Caco-2 (cell line): ENCODE measurements at regions of chr7 and their contacts with region 1.

Region 1: GRCh38 chr7:87506246-87507180 is 31.0 kb upstream of the ABCB4 start:
- DNase-seq: no peak
- H3K4me3 ChIP-seq: no peak overlapping the region
- H3K4me3 Mint-ChIP-seq: no peak overlapping the region
- H3K27ac Mint-ChIP-seq: no peak overlapping the region
- H3K4me1 ChIP-seq: no peaks in the 10 kb centered on the region
- H3K4me1 Mint-ChIP-seq: no peaks in the 10 kb centered on the region
- H3K27me3 ChIP-seq: no peaks in the 10 kb centered on the region
- H3K27me3 Mint-ChIP-seq: no peaks in the 10 kb centered on the region
- CTCF ChIP-seq: peak; percentile 11 to 42

Region 2: GRCh38 chr7:87287738-87288341 is 218.7 kb before region 1 on chr7:
- CTCF ChIA-PET with region 1: no interaction called
- POLR2A ChIA-PET with region 1: no interaction called
- intact Hi-C with region 1: no loop called
- DNase-seq: no peak
- H3K4me3 ChIP-seq: no peak overlapping the region
- H3K4me3 Mint-ChIP-seq: no peak overlapping the region
- H3K27ac Mint-ChIP-seq: no peak overlapping the region
- H3K4me1 ChIP-seq: no peaks in the 10 kb centered on the region
- H3K4me1 Mint-ChIP-seq: no peaks in the 10 kb centered on the region
- H3K27me3 ChIP-seq: no peaks in the 10 kb centered on the region
- H3K27me3 Mint-ChIP-seq: no peaks in the 10 kb centered on the region
- CTCF ChIP-seq: no peak

Region 3: GRCh38 chr7:87600130-87601124 is 93.9 kb after region 1 on chr7 and contains the start of gene ABCB1:
- CTCF ChIA-PET with region 1: no interaction called
- POLR2A ChIA-PET with region 1: no interaction called
- intact Hi-C with region 1: loop called (anchors 5 kb)
- DNase-seq: peak; percentile 61 to 70
- H3K4me3 ChIP-seq: peak within 1 kb of the TSS; percentile 29
- H3K4me3 Mint-ChIP-seq: peak within 1 kb of the TSS; percentile 85
- H3K27ac Mint-ChIP-seq: no peak within 1 kb of the TSS
- H3K4me1 ChIP-seq: peaks cover 17% of the 10 kb centered on the region
- H3K4me1 Mint-ChIP-seq: peaks cover 19% of the 10 kb centered on the region
- H3K27me3 ChIP-seq: no peaks in the 10 kb centered on the region
- H3K27me3 Mint-ChIP-seq: peaks cover 21% of the 10 kb centered on the region
- CTCF ChIP-seq: no peak
- total RNA-seq, gene ABCB1: 34.6 and 37.3 TPM in 2 replicates

Region 4: DNA sequence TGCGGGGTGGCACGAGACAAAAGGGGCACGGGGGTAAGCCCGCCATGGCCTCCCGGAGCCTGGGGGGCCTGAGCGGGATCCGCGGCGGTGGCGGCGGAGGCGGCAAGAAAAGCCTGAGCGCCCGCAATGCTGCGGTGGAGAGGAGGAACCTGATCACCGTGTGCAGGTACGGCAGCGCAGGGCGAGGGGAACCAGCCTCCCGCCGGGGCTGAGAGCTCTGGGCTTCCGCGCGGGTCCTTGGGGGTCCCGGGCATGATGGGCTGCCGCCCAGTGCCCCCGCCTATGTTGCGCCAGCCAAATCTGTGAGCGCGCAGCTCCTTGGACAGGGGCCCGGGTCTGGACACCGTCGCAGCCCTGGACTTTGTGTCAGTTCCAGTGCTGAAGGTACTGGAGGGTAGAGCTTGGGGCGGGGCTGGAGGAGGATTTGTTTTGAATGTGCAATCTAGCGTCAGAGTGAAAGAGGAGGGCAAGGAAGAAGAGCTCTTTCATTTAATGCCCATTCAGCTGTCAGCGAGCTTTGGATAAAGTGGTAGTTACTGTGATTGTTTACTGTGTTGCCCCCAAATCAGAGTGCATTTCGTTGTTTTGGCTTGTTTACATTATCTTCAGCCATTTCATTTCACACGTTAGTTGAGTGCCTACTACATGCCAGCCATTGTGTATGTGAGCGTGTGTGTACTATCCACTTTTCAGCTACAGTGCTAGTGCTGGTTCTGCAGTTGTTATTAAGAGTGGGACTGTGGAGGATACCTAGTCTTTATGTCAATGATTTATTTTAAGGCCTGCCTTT is 122.5 kb after region 1 on chr7:
- CTCF ChIA-PET with region 1: interaction called, 3 read pairs
- POLR2A ChIA-PET with region 1: no interaction called
- intact Hi-C with region 1: loop called (anchors 2 kb)
- DNase-seq: peak; percentile 47 to 50
- H3K4me3 ChIP-seq: peak overlapping the region; percentile 71
- H3K4me3 Mint-ChIP-seq: peak overlapping the region; percentile 86
- H3K27ac Mint-ChIP-seq: no peak overlapping the region
- H3K4me1 ChIP-seq: no peaks in the 10 kb centered on the region
- H3K4me1 Mint-ChIP-seq: peaks cover 6% of the 10 kb centered on the region
- H3K27me3 ChIP-seq: no peaks in the 10 kb centered on the region
- H3K27me3 Mint-ChIP-seq: peaks cover 4% of the 10 kb centered on the region
- CTCF ChIP-seq: no peak